CD4-positive, alpha-beta T cell (primary cell): ENCODE measurements at regions of chrX and their contacts with region 1.

Region 1: DNA sequence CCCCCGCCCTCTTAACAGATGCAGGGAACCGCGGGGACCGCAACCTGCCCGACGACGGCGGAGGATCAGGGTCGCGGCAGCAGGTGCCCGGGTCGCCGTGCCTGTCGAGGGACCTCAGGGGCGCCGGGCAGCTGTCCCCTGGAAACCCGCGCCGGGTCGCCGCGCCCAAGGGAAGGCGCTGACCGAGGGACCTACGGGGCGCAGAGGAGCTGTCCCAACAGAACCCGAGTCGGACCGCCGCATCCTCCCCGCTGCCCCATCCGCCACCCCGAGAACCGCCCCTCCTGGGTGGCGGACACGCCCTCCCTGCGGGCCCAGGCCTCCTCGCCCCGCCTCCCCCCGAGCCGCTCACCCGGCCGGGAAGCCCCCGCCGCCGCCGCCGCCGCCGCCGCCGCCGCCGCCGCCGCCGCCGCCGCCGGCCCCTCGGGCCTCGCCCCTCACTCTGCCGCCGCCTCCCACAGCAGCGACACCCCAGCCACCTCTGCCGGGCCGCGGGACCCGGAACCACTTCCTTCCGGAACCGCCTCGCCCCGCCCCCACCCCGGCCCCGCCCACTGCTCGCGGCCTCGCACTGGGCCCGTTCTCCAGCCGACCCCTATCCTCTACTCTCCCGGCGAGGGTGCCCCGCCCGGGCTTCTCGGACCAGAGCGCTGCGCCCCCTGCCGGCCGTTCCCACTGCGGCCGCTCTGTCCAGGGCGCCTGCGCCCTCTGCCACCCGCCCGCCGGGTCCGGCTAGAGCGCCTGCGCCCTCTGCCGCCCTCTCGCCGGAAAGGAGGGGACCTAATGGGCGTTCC is at the start of gene BCLAF3:
- DNase-seq: peak; percentile 62 to 91 (median 81)
- ATAC-seq: peak; percentile 74
- H3K4me3 ChIP-seq: peak within 1 kb of the TSS; percentile 57
- H3K4me3 Mint-ChIP-seq: peak within 1 kb of the TSS; percentile 97
- H3K27ac ChIP-seq: peak within 1 kb of the TSS; percentile 13 to 56
- H3K27ac Mint-ChIP-seq: peak within 1 kb of the TSS; percentile 83
- H3K4me1 ChIP-seq: peaks cover 9% of the 10 kb centered on the region
- H3K4me1 Mint-ChIP-seq: peaks cover 23% of the 10 kb centered on the region
- H3K27me3 ChIP-seq: no peaks in the 10 kb centered on the region
- H3K27me3 Mint-ChIP-seq: no peaks in the 10 kb centered on the region
- CTCF ChIP-seq: peak; percentile 59
- total RNA-seq, gene BCLAF3: 6.5 to 8.5 TPM

Region 2: DNA sequence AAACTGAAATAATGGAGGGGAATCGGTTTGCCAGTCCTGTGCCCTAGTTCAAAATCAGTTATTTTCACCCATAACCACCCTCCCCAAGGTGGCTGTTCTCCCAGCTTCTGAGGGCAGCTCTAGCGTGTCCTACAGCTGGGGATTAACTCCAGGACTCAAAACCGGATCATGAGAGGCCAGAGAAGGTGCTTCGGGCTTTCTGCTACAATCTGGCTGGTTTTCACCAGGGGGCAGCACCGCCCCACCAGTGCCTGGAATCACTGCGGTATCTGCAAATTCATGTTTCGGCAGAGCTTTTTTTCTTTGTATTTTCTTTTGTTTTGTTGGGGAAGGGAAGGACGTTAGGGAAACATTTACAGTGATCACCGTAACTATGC is 618.6 kb before region 1 on chrX:
- CTCF ChIA-PET with region 1: no interaction called
- POLR2A ChIA-PET with region 1: no interaction called
- intact Hi-C with region 1: loop called in 1 of 2 experiments (anchors 5 kb)
- DNase-seq: peak; percentile 33 to 77 (median 56)
- ATAC-seq: peak; percentile 76
- H3K4me3 ChIP-seq: peak overlapping the region; percentile 59
- H3K4me3 Mint-ChIP-seq: peak overlapping the region; percentile 80
- H3K27ac ChIP-seq: no peak overlapping the region
- H3K27ac Mint-ChIP-seq: no peak overlapping the region
- H3K4me1 ChIP-seq: peaks cover 11% of the 10 kb centered on the region
- H3K4me1 Mint-ChIP-seq: peaks cover 9% of the 10 kb centered on the region
- H3K27me3 ChIP-seq: no peaks in the 10 kb centered on the region
- H3K27me3 Mint-ChIP-seq: no peaks in the 10 kb centered on the region
- CTCF ChIP-seq: peak; percentile 67

Region 3: GRCh38 chrX:19544693-19545305 is 446.0 kb before region 1 on chrX:
- CTCF ChIA-PET with region 1: no interaction called
- POLR2A ChIA-PET with region 1: no interaction called
- intact Hi-C with region 1: loop called in 1 of 2 experiments (anchors 5 kb)
- DNase-seq: peak in 9 of 14 experiments; percentile 5 to 64 (median 23)
- ATAC-seq: peak; percentile 60
- H3K4me3 ChIP-seq: no peak overlapping the region
- H3K4me3 Mint-ChIP-seq: no peak overlapping the region
- H3K27ac ChIP-seq: no peak overlapping the region
- H3K27ac Mint-ChIP-seq: peak overlapping the region; percentile 40
- H3K4me1 ChIP-seq: no peaks in the 10 kb centered on the region
- H3K4me1 Mint-ChIP-seq: no peaks in the 10 kb centered on the region
- H3K27me3 ChIP-seq: no peaks in the 10 kb centered on the region
- H3K27me3 Mint-ChIP-seq: no peaks in the 10 kb centered on the region
- CTCF ChIP-seq: peak; percentile 60

Region 4: GRCh38 chrX:19593690-19594089 is 397.1 kb before region 1 on chrX:
- CTCF ChIA-PET with region 1: no interaction called
- POLR2A ChIA-PET with region 1: no interaction called
- intact Hi-C with region 1: loop called in 1 of 2 experiments (anchors 10 kb)
- DNase-seq: peak in 6 of 14 experiments; percentile 3 to 62 (median 44)
- ATAC-seq: peak; percentile 44
- H3K4me3 ChIP-seq: no peak overlapping the region
- H3K4me3 Mint-ChIP-seq: no peak overlapping the region
- H3K27ac ChIP-seq: no peak overlapping the region
- H3K27ac Mint-ChIP-seq: no peak overlapping the region
- H3K4me1 ChIP-seq: no peaks in the 10 kb centered on the region
- H3K4me1 Mint-ChIP-seq: peaks cover 10% of the 10 kb centered on the region
- H3K27me3 ChIP-seq: no peaks in the 10 kb centered on the region
- H3K27me3 Mint-ChIP-seq: no peaks in the 10 kb centered on the region
- CTCF ChIP-seq: peak; percentile 54

Region 5: GRCh38 chrX:19739683-19740082 is 251.1 kb before region 1 on chrX:
- CTCF ChIA-PET with region 1: no interaction called
- POLR2A ChIA-PET with region 1: no interaction called
- intact Hi-C with region 1: loop called in 1 of 2 experiments (anchors 10 kb)
- DNase-seq: peak in 12 of 14 experiments; percentile 9 to 75 (median 33)
- ATAC-seq: peak; percentile 31
- H3K4me3 ChIP-seq: no peak overlapping the region
- H3K4me3 Mint-ChIP-seq: peak overlapping the region; percentile 56
- H3K27ac ChIP-seq: no peak overlapping the region
- H3K27ac Mint-ChIP-seq: peak overlapping the region; percentile 74
- H3K4me1 ChIP-seq: peaks cover 64% of the 10 kb centered on the region
- H3K4me1 Mint-ChIP-seq: peaks cover 79% of the 10 kb centered on the region
- H3K27me3 ChIP-seq: no peaks in the 10 kb centered on the region
- H3K27me3 Mint-ChIP-seq: no peaks in the 10 kb centered on the region
- CTCF ChIP-seq: peak; percentile 53

Region 6: DNA sequence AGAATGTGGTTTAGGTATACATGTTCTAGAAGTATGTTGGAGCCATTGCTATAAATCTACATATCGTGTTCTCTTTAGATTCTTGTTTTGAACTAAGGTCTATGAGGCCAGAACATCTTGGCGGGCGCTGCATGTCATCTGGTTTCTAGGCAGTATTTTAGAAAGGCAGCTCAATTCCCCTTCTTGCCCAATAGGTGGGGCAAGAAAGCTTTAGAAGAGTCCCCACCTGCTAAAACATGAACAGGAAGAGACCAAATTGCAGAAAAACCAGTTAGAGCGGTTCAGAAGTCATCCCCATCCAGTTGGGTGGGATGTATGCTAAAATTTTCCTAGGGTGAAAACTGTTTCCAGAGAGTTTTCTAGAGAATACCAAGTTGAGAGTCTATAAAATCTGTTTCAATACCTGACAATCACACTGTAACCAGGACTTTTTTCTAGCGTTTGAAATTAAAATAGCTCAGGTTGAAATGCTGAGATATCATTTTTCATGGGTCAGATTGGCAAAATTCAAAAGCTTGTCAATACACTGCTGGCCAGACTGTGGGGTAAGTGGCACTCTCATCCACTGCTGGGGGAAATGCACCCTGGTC is 85.9 kb before region 1 on chrX:
- CTCF ChIA-PET with region 1: interaction called, 4 read pairs
- POLR2A ChIA-PET with region 1: interaction called, 3 read pairs
- intact Hi-C with region 1: loop called (anchors 2 to 5 kb)
- DNase-seq: peak in 4 of 14 experiments; percentile 35 to 69 (median 62)
- ATAC-seq: peak; percentile 73
- H3K4me3 ChIP-seq: no peak overlapping the region
- H3K4me3 Mint-ChIP-seq: no peak overlapping the region
- H3K27ac ChIP-seq: no peak overlapping the region
- H3K27ac Mint-ChIP-seq: no peak overlapping the region
- H3K4me1 ChIP-seq: no peaks in the 10 kb centered on the region
- H3K4me1 Mint-ChIP-seq: peaks cover 11% of the 10 kb centered on the region
- H3K27me3 ChIP-seq: no peaks in the 10 kb centered on the region
- H3K27me3 Mint-ChIP-seq: no peaks in the 10 kb centered on the region
- CTCF ChIP-seq: peak; percentile 66

Region 7: DNA sequence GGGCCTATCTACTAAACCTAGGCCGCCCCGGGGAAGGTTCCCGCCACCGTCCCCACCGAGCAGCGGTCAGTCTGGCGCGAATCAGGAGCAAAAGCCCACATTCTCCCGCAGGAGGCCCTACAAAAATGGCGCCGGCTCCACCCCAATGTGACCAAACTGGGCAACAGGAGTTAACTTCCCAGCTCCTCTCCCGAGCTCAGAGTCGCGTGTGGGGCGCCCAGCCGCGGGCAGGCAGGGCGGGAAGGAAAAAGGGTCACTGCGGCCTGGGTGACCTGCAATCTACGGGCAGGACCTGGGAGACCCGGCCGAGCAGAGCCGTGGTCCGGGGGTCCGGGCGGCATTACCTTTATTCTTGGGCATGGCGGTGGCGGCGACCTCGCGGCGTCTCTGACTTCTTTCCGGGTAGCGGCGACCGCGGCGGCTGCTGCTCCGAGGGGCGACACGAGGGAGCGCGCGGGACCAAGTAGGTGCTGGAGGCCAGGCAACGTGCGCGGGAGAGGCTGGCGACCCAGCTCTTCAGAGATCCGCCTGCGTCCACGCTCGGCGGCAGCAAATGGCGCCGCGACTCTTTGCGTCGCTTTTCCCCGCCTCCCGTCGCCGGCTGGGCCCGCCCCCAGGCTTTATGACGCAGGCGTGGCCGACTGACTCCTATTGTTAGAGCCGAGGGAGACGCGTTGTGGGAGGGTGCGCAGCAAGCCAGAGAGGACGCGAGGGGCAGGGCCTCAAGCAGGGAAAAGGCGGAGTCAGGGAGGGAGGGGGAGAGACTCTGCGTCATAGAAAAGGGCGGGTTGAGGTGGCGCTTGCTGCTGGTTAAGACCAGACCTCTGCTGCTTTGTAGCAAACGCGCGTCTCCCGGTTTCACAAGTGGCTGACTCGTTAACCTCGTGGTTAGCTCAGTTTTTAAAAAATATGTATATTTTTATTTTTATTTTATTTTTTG is 150.8 kb after region 1 on chrX and contains the start of gene EIF1AX:
- CTCF ChIA-PET with region 1: no interaction called
- POLR2A ChIA-PET with region 1: no interaction called
- intact Hi-C with region 1: loop called in 1 of 2 experiments (anchors 10 kb)
- DNase-seq: peak; percentile 89 to 99 (median 96)
- ATAC-seq: peak; percentile 98
- H3K4me3 ChIP-seq: peak within 1 kb of the TSS; percentile 92
- H3K4me3 Mint-ChIP-seq: peak within 1 kb of the TSS; percentile 85
- H3K27ac ChIP-seq: peak within 1 kb of the TSS; percentile 64 to 75
- H3K27ac Mint-ChIP-seq: peak within 1 kb of the TSS; percentile 88
- H3K4me1 ChIP-seq: peaks cover 13% of the 10 kb centered on the region
- H3K4me1 Mint-ChIP-seq: peaks cover 33% of the 10 kb centered on the region
- H3K27me3 ChIP-seq: no peaks in the 10 kb centered on the region
- H3K27me3 Mint-ChIP-seq: no peaks in the 10 kb centered on the region
- CTCF ChIP-seq: no peak
- total RNA-seq, gene EIF1AX: 56.1 to 62.5 TPM